ENCODE measurements at regions of chr22 and their contacts with region 1.

Region 1: GRCh38 chr22:36379593-36380361 is 8.0 kb downstream of the MYH9 start:
- DNase-seq: peak; percentile 59
- H3K4me3 Mint-ChIP-seq: peak overlapping the region; percentile 67
- H3K27ac Mint-ChIP-seq: peak overlapping the region; percentile 98
- H3K4me1 Mint-ChIP-seq: peaks cover 93% of the 10 kb centered on the region
- H3K27me3 Mint-ChIP-seq: no peaks in the 10 kb centered on the region

Region 2: DNA sequence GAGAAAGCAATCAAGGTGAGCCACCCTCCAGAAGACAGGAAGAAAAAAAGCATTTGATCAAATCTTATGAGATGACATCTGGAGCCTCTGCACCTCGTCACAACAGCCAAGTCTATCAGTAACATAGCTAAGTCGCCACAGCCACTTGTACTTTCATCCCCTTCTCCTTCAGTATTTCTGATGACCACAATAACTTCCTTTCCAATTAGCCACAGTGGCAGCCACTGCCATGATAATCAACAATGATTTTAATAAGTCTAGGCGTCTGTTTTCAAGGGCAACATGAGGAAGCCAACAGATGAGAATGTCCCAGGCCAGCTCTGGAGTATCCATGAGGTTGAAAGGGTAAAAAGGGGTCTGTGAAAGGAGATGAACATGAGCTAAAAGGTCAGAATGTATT is 381.0 kb before region 1 on chr22:
- CTCF ChIA-PET with region 1: no interaction called
- POLR2A ChIA-PET with region 1: no interaction called
- intact Hi-C with region 1: no loop called
- DNase-seq: no peak
- H3K4me3 Mint-ChIP-seq: no peak overlapping the region
- H3K27ac Mint-ChIP-seq: no peak overlapping the region
- H3K4me1 Mint-ChIP-seq: no peaks in the 10 kb centered on the region
- H3K27me3 Mint-ChIP-seq: peaks cover 2% of the 10 kb centered on the region

Region 3: GRCh38 chr22:36365020-36365411 is 14.8 kb before region 1 on chr22:
- CTCF ChIA-PET with region 1: interaction called, 34 read pairs
- POLR2A ChIA-PET with region 1: interaction called, 18 read pairs
- intact Hi-C with region 1: loop called (anchors 1 kb)
- DNase-seq: peak; percentile 95
- H3K4me3 Mint-ChIP-seq: peak overlapping the region; percentile 60
- H3K27ac Mint-ChIP-seq: peak overlapping the region; percentile 85
- H3K4me1 Mint-ChIP-seq: peaks cover 95% of the 10 kb centered on the region
- H3K27me3 Mint-ChIP-seq: no peaks in the 10 kb centered on the region

Region 4: GRCh38 chr22:36432592-36433317 is 53.0 kb after region 1 on chr22:
- CTCF ChIA-PET with region 1: no interaction called
- POLR2A ChIA-PET with region 1: no interaction called
- intact Hi-C with region 1: no loop called
- DNase-seq: no peak
- H3K4me3 Mint-ChIP-seq: no peak overlapping the region
- H3K27ac Mint-ChIP-seq: no peak overlapping the region
- H3K4me1 Mint-ChIP-seq: peaks cover 27% of the 10 kb centered on the region
- H3K27me3 Mint-ChIP-seq: no peaks in the 10 kb centered on the region

Region 5: DNA sequence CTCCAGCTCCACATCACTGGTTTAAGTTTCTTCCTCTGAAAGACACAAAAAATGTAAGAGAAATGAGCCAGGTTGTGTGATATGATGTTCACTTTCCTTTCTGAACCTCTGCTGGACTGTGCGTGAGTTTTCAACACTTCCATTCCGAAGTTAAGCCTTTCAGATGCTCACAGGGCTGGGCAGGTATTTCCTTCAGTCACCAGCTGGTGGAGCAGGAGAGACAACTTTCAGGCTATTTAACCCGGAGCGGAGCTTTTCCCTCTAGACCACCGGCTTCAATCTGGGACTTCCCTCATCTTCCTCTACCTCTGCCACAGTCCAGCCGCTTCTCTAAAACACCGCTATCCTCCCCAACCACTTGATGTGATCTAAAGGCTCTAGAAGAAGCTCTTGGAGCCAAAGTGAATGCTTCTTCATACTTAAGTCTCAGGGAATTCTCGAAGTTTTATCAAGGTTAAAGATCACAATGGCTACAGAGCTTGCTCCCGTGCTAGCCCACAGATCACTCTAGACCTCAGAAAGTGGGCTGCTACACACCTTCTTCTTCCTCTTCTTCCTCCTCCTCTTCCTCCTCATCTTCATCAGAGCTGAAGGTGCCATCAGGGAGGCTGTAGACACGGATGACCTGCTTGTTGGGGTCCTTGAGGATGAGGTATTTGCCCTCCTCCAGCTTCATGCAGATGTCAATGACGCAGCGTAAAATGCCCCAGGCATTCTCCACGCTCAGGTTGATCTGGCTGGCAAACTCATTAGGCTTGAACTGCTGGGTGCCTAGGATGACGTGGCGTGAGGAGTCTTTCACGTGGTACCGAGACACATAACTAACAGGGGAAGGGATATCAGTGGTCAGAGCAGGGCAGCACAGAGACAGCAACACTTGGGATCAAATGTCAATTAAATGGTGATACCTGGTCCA is 131.4 kb after region 1 on chr22:
- CTCF ChIA-PET with region 1: no interaction called
- POLR2A ChIA-PET with region 1: no interaction called
- intact Hi-C with region 1: no loop called
- DNase-seq: peak; percentile 48
- H3K4me3 Mint-ChIP-seq: no peak overlapping the region
- H3K27ac Mint-ChIP-seq: no peak overlapping the region
- H3K4me1 Mint-ChIP-seq: peaks cover 9% of the 10 kb centered on the region
- H3K27me3 Mint-ChIP-seq: no peaks in the 10 kb centered on the region

Region 6: DNA sequence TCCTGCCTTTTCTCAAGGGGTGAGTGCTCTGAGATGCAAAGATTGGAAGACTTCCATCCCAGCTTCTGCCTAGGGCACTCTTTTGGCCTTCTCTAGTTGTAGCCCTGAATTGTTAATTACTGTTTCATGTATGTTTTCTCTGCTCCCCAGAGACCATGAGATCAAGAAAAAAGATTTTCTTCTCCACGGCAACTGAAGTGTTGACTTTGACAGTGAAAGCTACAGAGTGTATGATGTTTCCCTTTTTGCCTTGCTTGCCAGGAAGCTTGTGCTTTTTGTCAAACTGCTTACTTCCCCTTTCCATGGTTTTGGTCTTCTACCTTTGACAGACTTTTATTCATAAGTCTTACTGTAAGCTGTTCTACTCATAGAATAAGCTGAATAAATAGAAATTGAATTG is 172.5 kb after region 1 on chr22:
- CTCF ChIA-PET with region 1: no interaction called
- POLR2A ChIA-PET with region 1: no interaction called
- intact Hi-C with region 1: no loop called
- DNase-seq: no peak
- H3K4me3 Mint-ChIP-seq: no peak overlapping the region
- H3K27ac Mint-ChIP-seq: no peak overlapping the region
- H3K4me1 Mint-ChIP-seq: peaks cover 4% of the 10 kb centered on the region
- H3K27me3 Mint-ChIP-seq: peaks cover 13% of the 10 kb centered on the region

Measured in activated CD4-positive, alpha-beta memory T cell treated with anti-CD3 and anti-CD28 coated beads for 36 hours (primary cell).